ENCODE measurements at regions of chr14 and their contacts with region 1.

Region 1: DNA sequence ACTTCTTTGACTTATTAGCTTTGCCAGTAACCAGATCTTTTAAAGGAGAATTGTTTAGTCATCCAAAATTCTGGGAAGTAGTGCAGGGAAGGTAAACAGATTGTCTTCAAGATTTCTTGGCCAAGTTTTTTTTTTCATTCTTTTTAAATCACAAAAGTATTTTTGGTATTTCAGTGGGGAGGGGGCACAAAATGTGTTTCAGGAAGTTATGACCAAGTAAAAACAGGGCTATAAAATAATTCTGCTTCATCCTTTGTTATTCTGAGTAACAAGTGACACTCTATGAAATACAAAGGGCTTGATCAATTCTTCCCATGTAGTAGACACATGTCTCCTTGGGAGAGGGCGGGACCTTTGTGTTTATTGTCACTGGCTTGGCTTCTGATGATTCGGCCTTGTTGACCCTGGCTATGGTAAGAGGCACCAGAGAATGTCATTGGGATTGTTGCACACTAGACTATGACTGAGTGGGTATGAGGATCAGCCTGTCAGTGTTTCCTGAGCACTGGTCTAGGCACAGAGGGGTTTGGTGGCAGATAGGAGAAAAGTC is 55.4 kb downstream of the SUSD6 start:
- DNase-seq: no peak
- ATAC-seq: no peak

Region 2: GRCh38 chr14:69611201-69612011 is 55.4 kb before region 1 on chr14 and contains the start of gene SUSD6:
- intact Hi-C with region 1: loop called (anchors 5 kb)
- DNase-seq: peak; percentile 97
- ATAC-seq: peak; percentile 90
- total RNA-seq, gene SUSD6: 22.4 TPM

Region 3: GRCh38 chr14:69715725-69716477 is 49.1 kb after region 1 on chr14:
- intact Hi-C with region 1: loop called (anchors 10 kb)
- DNase-seq: peak; percentile 81
- ATAC-seq: peak; percentile 50